Caco-2 (cell line): ENCODE measurements at regions of chr21 and their contacts with region 1.

Region 1: GRCh38 chr21:38669176-38669575 is 136.6 kb upstream of the ETS2 start:
- DNase-seq: peak in 1 of 2 experiments; percentile 21
- H3K4me3 ChIP-seq: no peak overlapping the region
- H3K4me3 Mint-ChIP-seq: no peak overlapping the region
- H3K27ac Mint-ChIP-seq: no peak overlapping the region
- H3K4me1 ChIP-seq: no peaks in the 10 kb centered on the region
- H3K4me1 Mint-ChIP-seq: peaks cover 6% of the 10 kb centered on the region
- H3K27me3 ChIP-seq: no peaks in the 10 kb centered on the region
- H3K27me3 Mint-ChIP-seq: peaks cover 26% of the 10 kb centered on the region
- CTCF ChIP-seq: peak; percentile 33 to 52

Region 2: DNA sequence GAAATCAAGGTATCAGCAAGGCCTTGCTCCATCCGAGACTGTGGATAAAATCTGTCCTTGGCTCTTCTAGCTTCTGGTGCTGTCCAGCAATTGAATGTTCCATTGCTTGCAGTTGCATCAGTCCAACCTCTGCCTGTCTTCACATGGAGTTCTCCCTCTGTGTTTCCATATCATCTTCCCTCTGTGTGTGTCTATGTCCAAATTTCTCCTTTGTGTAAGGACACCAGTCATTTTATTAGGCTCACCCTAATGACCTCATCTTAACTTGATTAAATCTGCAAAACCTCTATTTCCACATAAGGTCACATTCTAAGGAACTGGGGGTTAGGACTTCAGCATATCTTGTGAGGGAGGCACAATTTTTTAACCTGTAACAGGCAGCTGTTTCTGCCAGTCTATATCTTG is 255.1 kb before region 1 on chr21:
- CTCF ChIA-PET with region 1: no interaction called
- POLR2A ChIA-PET with region 1: no interaction called
- intact Hi-C with region 1: no loop called
- DNase-seq: no peak
- H3K4me3 ChIP-seq: no peak overlapping the region
- H3K4me3 Mint-ChIP-seq: no peak overlapping the region
- H3K27ac Mint-ChIP-seq: no peak overlapping the region
- H3K4me1 ChIP-seq: no peaks in the 10 kb centered on the region
- H3K4me1 Mint-ChIP-seq: no peaks in the 10 kb centered on the region
- H3K27me3 ChIP-seq: no peaks in the 10 kb centered on the region
- H3K27me3 Mint-ChIP-seq: peaks cover 20% of the 10 kb centered on the region
- CTCF ChIP-seq: no peak

Region 3: DNA sequence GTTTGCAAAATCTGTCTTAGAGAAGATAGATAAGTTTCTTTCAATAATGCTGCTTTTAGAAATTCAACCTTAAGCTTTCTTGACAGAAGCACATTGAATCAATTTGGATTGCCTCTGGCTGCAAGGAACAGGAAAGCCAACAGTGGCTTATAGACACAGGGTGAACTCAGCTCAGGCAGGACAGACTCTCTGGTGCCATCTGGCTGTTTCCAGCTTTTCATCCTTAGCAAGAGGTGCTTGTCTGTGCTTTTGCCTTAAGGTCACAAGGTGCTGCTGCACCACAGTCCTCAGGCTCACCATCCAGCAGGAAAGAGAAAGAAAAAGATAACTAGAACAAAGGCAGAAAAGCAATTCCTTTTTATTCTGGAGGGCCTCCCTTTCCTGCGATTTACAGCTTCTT is 42.9 kb after region 1 on chr21:
- CTCF ChIA-PET with region 1: interaction called, 14 read pairs
- POLR2A ChIA-PET with region 1: no interaction called
- intact Hi-C with region 1: loop called (anchors 1 kb)
- DNase-seq: peak; percentile 67 to 69
- H3K4me3 ChIP-seq: no peak overlapping the region
- H3K4me3 Mint-ChIP-seq: no peak overlapping the region
- H3K27ac Mint-ChIP-seq: no peak overlapping the region
- H3K4me1 ChIP-seq: no peaks in the 10 kb centered on the region
- H3K4me1 Mint-ChIP-seq: no peaks in the 10 kb centered on the region
- H3K27me3 ChIP-seq: no peaks in the 10 kb centered on the region
- H3K27me3 Mint-ChIP-seq: no peaks in the 10 kb centered on the region
- CTCF ChIP-seq: peak; percentile 53 to 79

Region 4: DNA sequence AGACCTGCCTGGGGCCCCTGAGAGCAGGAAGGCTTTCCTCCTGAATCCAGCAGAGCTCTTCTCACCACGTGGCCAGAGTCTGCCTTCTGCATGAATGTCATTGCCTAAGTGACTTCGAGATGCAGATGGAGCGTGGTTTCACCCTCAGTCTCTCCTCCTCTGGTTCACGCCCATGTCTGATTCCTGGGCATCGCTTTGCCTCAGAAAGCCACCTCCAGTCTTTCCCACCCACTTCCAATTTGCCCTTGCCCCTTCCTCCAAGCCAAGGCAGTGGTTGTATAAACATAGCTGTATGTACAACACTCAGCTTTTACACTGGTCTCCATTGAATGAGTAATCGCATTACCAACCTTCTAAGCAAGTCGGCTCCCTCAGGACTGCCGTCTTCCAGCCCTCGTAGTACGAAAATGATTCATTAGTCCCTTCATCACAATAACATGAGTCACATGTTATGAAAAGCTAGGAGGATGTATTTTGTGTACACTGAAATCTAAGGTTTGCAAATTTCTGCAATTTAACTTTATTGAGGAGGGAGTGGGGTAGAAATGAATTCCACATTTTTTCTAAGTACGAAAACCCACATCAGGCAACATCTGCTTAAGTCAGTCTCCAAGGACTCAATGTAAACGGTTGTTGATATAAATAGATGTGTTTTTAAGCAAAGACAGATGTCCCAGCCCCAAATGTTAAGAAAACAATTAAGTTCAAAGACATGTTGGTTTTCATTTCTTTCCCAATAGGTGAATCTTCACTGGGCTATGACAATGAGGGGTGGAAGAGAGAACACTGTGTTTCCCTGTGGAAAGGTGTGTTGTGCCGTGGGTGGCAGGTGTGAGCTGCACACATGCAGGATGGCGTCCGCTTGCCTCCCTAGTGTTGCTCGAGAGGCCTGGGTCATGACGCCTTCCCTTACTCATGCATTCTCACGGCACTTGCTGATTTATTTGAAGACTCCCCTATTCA is 104.2 kb after region 1 on chr21:
- CTCF ChIA-PET with region 1: no interaction called
- POLR2A ChIA-PET with region 1: no interaction called
- intact Hi-C with region 1: no loop called
- DNase-seq: no peak
- H3K4me3 ChIP-seq: no peak overlapping the region
- H3K4me3 Mint-ChIP-seq: no peak overlapping the region
- H3K27ac Mint-ChIP-seq: peak overlapping the region; percentile 74
- H3K4me1 ChIP-seq: peaks cover 33% of the 10 kb centered on the region
- H3K4me1 Mint-ChIP-seq: peaks cover 26% of the 10 kb centered on the region
- H3K27me3 ChIP-seq: no peaks in the 10 kb centered on the region
- H3K27me3 Mint-ChIP-seq: no peaks in the 10 kb centered on the region
- CTCF ChIP-seq: no peak

Region 5: GRCh38 chr21:39137248-39138178 is 468.3 kb after region 1 on chr21:
- CTCF ChIA-PET with region 1: interaction called, 5 read pairs
- POLR2A ChIA-PET with region 1: no interaction called
- intact Hi-C with region 1: loop called (anchors 5 kb)
- DNase-seq: no peak
- H3K4me3 ChIP-seq: no peak overlapping the region
- H3K4me3 Mint-ChIP-seq: no peak overlapping the region
- H3K27ac Mint-ChIP-seq: no peak overlapping the region
- H3K4me1 ChIP-seq: no peaks in the 10 kb centered on the region
- H3K4me1 Mint-ChIP-seq: no peaks in the 10 kb centered on the region
- H3K27me3 ChIP-seq: no peaks in the 10 kb centered on the region
- H3K27me3 Mint-ChIP-seq: no peaks in the 10 kb centered on the region
- CTCF ChIP-seq: no peak